Esophagus squamous epithelium (tissue), 5 donors: ENCODE measurements at regions of chr2 and their contacts with region 1.

Region 1: GRCh38 chr2:157876066-157876787 is at the start of gene ACVR1:
- DNase-seq: peak; percentile 62
- H3K4me3 ChIP-seq: peak within 1 kb of the TSS; percentile 87 to 93 (median 90)
- H3K27ac ChIP-seq: peak within 1 kb of the TSS; percentile 96 to 99 (median 98)
- H3K4me1 ChIP-seq: peaks cover 6 to 50% (median 23%) of the 10 kb centered on the region in 3 donors
- H3K27me3 ChIP-seq: no peaks in the 10 kb centered on the region
- CTCF ChIP-seq: peak in 5 of 6 experiments; percentile 15 to 53 (median 35)
- POLR2A ChIP-seq: peak in 2 of 4 donors; percentile 31 to 75
- total RNA-seq, gene ACVR1: 4.7 to 18.7 (median 10.3) TPM

Region 2: GRCh38 chr2:157784169-157784822 is 91.9 kb before region 1 on chr2:
- intact Hi-C with region 1: loop called (anchors 10 kb)
- DNase-seq: no peak
- H3K4me3 ChIP-seq: peak overlapping the region in 3 of 4 donors; percentile 21 to 50 (median 25)
- H3K27ac ChIP-seq: peak overlapping the region; percentile 70 to 85 (median 76)
- H3K4me1 ChIP-seq: peaks cover 30 to 80% (median 54%) of the 10 kb centered on the region in 3 donors
- H3K27me3 ChIP-seq: no peaks in the 10 kb centered on the region
- CTCF ChIP-seq: no peak
- POLR2A ChIP-seq: peak in 1 of 4 donors; percentile 10

Region 3: GRCh38 chr2:158174495-158174894 is 298.3 kb after region 1 on chr2:
- intact Hi-C with region 1: no loop called
- DNase-seq: no peak
- H3K4me3 ChIP-seq: no peak overlapping the region
- H3K27ac ChIP-seq: no peak overlapping the region
- H3K4me1 ChIP-seq: no peaks in the 10 kb centered on the region
- H3K27me3 ChIP-seq: no peaks in the 10 kb centered on the region
- CTCF ChIP-seq: no peak
- POLR2A ChIP-seq: no peak